Motor neuron (in vitro differentiated cells): ENCODE measurements at regions of chr1 and their contacts with region 1.

Region 1: DNA sequence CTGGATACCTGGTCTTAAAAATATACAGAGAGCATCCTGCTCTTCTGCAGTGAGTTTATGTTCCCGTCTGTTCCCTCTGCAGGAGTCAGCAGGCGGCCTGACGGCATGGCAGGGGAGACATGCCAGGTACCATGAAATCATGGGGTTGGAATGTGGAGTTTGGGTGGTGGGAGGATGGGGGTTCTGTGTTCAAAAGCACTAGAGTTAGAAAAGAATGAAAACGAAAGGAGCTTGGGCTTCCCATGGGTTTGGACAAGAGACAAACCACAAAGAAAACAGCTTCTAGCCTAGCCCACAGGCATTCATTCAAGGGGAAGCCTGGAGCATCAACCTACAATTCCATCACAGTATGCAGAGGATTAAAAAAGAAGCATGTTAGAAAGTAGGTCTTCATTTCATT is 59.9 kb downstream of the WARS2 start:
- ATAC-seq: peak in 2 of 8 experiments; percentile 53 to 59
- H3K4me3 ChIP-seq: no peak overlapping the region
- H3K27ac ChIP-seq: no peak overlapping the region
- H3K4me1 ChIP-seq: no peaks in the 10 kb centered on the region

Region 2: GRCh38 chr1:119116725-119117124 is 36.1 kb after region 1 on chr1:
- in situ Hi-C with region 1: no loop called
- ATAC-seq: no peak
- H3K4me3 ChIP-seq: no peak overlapping the region
- H3K27ac ChIP-seq: no peak overlapping the region
- H3K4me1 ChIP-seq: peaks cover 5% of the 10 kb centered on the region in 2 donors

Region 3: DNA sequence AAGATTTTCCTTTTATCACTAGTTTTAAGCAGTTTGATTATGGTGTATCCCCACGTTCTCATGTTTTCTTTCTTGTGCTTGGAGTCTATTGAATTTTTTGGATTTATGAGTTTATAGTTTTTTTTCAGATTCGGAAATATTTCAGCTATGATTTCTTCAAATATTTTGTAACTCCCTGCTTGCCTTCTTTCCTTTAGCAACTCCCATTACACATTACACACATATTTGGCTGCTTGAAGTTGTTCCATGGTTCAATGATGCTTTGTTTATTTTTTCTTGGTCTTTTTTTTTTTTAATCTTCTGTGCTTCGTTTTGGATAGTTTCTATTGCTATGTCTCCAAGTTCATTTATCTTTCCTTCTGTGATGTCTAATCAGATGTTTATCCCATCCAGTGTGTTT is 108.3 kb after region 1 on chr1:
- in situ Hi-C with region 1: loop called in 1 of 9 experiments (anchors 25 kb)
- ATAC-seq: no peak
- H3K4me3 ChIP-seq: no peak overlapping the region
- H3K27ac ChIP-seq: no peak overlapping the region
- H3K4me1 ChIP-seq: no peaks in the 10 kb centered on the region